ENCODE measurements at regions of chr7 and their contacts with region 1.

Region 1: DNA sequence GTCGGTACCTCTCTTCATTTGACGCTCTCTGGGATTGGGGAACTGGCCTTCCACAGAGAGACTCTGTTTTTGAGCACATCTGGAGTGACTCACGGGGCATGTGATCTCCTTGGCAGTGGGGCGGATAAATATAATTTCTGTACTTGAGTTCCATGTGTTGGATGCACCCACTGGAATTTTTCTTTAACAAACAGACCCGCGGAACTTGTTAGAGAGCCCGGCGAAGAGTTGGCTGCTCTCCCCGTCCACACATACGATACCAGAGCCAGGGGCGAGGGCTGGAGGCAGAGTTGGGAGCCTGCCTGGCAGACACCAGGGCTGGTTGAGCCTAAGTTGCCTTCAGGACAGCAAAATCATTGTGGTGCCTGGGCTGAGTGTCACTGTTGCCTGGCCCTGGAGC is at the start of gene FAM180A:
- DNase-seq: peak; percentile 83
- ATAC-seq: peak; percentile 79
- total RNA-seq, gene FAM180A: 6.1 TPM

Region 2: DNA sequence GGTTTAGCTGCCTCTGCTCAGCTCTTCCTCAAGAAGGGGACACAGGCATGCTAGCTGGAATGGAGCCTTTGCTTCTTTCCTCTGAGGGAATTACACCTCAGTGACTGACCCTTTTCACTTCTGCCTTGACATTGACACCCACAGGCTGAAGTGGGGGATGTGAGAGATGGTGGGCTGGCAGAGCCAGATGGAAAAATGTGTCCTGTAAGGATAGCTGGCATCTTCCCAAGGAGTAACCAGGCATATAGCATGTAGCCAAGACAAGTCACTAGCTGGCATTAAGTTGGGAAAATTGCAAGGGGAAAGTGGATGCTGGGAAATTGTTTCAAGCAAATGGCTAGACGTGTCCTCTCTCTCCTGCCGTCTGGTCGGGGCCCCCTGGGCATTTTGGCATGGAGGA is 66.6 kb before region 1 on chr7:
- intact Hi-C with region 1: loop called (anchors 2 kb)
- DNase-seq: no peak
- ATAC-seq: peak; percentile 33

Region 3: GRCh38 chr7:135769005-135769802 is 20.4 kb after region 1 on chr7:
- intact Hi-C with region 1: loop called (anchors 2 kb)
- DNase-seq: peak; percentile 75
- ATAC-seq: peak; percentile 88

Measured in Right ventricle myocardium inferior (tissue), 1 donor.